Activated naive CD4-positive, alpha-beta T cell treated with anti-CD3 and anti-CD28 coated beads, Interleukin-2, amount 10 ng/mL, durations not matched to agents 7 days and 5 days (primary cell): ENCODE measurements at regions of chr15 and their contacts with region 1.

Region 1: GRCh38 chr15:63402498-63403253 is 21.0 kb upstream of the CA12 start:
- DNase-seq: no peak
- H3K4me3 Mint-ChIP-seq: no peak overlapping the region
- H3K27ac Mint-ChIP-seq: no peak overlapping the region
- H3K4me1 Mint-ChIP-seq: peaks cover 14% of the 10 kb centered on the region
- H3K27me3 Mint-ChIP-seq: peaks cover 8% of the 10 kb centered on the region

Region 2: DNA sequence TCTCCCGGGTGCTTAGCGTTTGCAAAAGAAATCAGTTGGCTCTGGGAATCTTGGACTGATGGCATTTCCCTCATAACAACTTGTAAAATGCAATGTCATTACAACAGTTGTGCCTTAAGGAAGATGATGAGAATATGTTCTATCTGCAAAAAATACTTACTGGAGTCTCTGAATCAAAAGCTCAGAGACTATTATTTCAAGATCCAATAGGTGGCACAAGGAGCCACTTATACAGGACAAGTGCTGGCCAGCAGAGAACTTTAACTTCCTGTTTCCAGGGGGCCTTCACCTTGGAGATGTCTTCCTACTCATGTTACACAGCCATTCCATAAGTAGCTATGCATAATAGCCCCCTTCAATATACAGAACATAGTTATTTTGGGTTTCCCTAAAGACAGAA is 236.5 kb before region 1 on chr15:
- CTCF ChIA-PET with region 1: interaction called, 10 read pairs
- DNase-seq: no peak
- H3K4me3 Mint-ChIP-seq: no peak overlapping the region
- H3K27ac Mint-ChIP-seq: no peak overlapping the region
- H3K4me1 Mint-ChIP-seq: peaks cover 2% of the 10 kb centered on the region
- H3K27me3 Mint-ChIP-seq: peaks cover 5% of the 10 kb centered on the region

Region 3: DNA sequence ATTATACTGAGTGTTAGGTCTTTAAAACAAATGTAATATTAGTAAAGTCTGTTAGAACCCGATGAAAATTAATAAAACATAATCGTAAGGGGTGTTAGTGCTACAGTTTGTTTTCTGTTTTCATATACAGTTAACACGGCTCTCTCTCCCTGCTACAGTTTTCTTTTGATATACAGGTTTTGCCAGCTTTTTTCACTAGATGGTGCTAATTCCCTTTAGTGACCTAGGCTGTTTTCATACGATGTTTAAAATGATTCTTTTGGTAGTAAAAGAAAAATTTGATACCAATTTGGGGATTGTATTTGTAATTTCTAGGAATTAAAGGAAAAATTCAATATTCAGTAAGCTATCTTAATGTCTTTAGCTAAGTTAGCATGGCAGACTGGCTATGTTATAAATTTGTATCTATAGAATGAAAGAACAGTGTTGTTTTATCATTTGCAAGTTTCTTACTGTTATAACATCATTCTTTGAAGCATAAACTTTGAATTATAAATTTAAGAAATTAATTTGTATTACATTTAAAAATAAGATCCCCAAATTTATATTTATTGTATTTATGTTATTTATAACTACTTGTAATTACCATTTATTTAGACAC is 113.8 kb before region 1 on chr15:
- CTCF ChIA-PET with region 1: interaction called, 16 read pairs
- DNase-seq: no peak
- H3K4me3 Mint-ChIP-seq: no peak overlapping the region
- H3K27ac Mint-ChIP-seq: no peak overlapping the region
- H3K4me1 Mint-ChIP-seq: peaks cover 5% of the 10 kb centered on the region
- H3K27me3 Mint-ChIP-seq: no peaks in the 10 kb centered on the region